ENCODE measurements at regions of chr7 and their contacts with region 1.

Region 1: DNA sequence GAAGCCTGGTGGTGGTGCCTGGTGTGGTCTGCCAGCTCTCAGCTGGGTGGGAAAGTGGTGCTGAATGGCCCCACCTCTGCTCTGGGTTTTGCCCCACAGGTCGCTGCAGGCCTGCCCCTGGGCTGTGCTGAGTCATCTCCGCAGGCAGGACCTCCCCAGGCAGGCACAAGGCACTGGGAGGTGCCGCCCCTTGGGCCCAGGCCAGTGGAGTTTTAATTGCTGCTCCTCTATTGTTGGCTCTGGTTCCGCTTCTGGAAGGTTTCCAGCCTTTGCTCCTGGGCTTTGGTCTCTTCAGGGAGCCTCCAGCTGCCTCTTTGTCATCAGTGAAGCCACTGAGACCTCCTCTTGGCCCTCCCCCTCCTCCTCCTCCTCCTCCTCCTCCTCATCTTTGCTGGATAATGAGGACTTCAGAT is 180.3 kb upstream of the GRB10 start:
- DNase-seq: peak in 4 of 5 donors; percentile 17 to 39 (median 20)
- H3K4me3 ChIP-seq: no peak overlapping the region
- H3K27ac ChIP-seq: no peak overlapping the region
- H3K4me1 ChIP-seq: no peaks in the 10 kb centered on the region
- H3K27me3 ChIP-seq: no peaks in the 10 kb centered on the region
- CTCF ChIP-seq: no peak
- EP300 ChIP-seq: no peak
- POLR2A ChIP-seq: no peak

Region 2: GRCh38 chr7:49255054-49255453 is 1707.9 kb before region 1 on chr7:
- intact Hi-C with region 1: loop called in 1 of 4 experiments (anchors 5 kb)
- DNase-seq: no peak
- H3K4me3 ChIP-seq: no peak overlapping the region
- H3K27ac ChIP-seq: no peak overlapping the region
- H3K4me1 ChIP-seq: no peaks in the 10 kb centered on the region
- H3K27me3 ChIP-seq: no peaks in the 10 kb centered on the region
- CTCF ChIP-seq: no peak
- EP300 ChIP-seq: no peak
- POLR2A ChIP-seq: no peak

Region 3: GRCh38 chr7:50851451-50851850 is 111.5 kb before region 1 on chr7:
- intact Hi-C with region 1: no loop called
- DNase-seq: no peak
- H3K4me3 ChIP-seq: no peak overlapping the region
- H3K27ac ChIP-seq: no peak overlapping the region
- H3K4me1 ChIP-seq: no peaks in the 10 kb centered on the region
- H3K27me3 ChIP-seq: no peaks in the 10 kb centered on the region
- CTCF ChIP-seq: no peak
- EP300 ChIP-seq: no peak
- POLR2A ChIP-seq: no peak